ENCODE measurements at regions of chr9 and their contacts with region 1.

Region 1: GRCh38 chr9:23702311-23702922 is 123.6 kb downstream of the ELAVL2 start:
- DNase-seq: no peak
- H3K4me3 ChIP-seq: no peak overlapping the region
- H3K27ac ChIP-seq: no peak overlapping the region
- H3K4me1 ChIP-seq: no peaks in the 10 kb centered on the region
- H3K27me3 ChIP-seq: no peaks in the 10 kb centered on the region
- CTCF ChIP-seq: peak; percentile 23 to 42

Region 2: DNA sequence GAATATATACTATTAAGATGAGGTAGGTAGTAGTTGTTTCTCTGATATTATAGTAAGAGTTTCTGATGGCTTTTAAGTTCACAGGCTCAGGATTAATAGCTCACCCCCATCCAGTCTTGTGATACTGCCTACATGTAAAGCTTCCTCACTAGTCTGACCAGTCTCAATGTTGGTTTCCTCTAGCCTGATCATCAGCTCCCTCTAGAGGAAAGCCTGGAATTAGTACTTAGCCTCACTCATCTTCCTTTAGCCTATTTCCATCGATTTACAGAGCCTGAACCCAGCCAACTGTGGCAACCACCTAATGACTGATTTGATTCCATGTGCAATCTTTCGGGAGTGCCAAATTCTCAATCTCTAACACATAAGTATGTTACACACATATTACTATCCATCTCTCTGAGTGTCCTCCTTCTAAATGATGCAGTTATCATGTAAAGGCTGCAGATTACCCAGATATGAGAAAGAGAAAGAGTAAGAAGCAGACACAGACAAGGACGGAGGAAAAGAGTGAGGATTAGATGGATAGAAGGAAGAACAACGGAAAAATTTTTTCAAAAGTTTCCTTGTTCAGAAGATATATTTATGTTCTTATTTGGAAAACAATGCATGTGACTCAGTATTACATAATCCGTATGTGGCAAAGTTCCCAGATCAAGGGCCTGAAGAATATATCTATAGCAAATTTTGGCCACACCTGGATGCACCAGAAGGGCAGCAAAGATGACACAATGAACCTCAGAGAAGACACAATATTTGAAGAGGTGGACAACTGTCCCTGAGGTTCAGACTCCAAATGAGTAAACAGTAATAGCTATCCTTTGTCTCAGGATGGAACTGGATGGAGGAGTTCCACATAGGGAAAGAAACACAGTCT is 210.1 kb before region 1 on chr9:
- CTCF ChIA-PET with region 1: no interaction called
- dilution Hi-C with region 1: no loop called
- in situ Hi-C with region 1: no loop called
- intact Hi-C with region 1: loop called (anchors 1 kb)
- DNase-seq: peak; percentile 57
- H3K4me3 ChIP-seq: no peak overlapping the region
- H3K27ac ChIP-seq: no peak overlapping the region
- H3K4me1 ChIP-seq: peaks cover 9% of the 10 kb centered on the region
- H3K27me3 ChIP-seq: peaks cover 2% of the 10 kb centered on the region
- CTCF ChIP-seq: peak; percentile 68 to 78

Measured in mammary epithelial cell (primary cell).